Left cardiac atrium (tissue), 4 donors: ENCODE measurements at regions of chr12 and their contacts with region 1.

Region 1: GRCh38 chr12:92987362-92987761 is 58.3 kb upstream of the EEA1 start:
- DNase-seq: no peak
- ATAC-seq: peak; percentile 87 to 91

Region 2: GRCh38 chr12:93127582-93128331 is 140.4 kb after region 1 on chr12:
- intact Hi-C with region 1: loop called in 1 of 2 experiments (anchors 1 kb)
- DNase-seq: peak; percentile 79
- ATAC-seq: peak; percentile 92 to 96

Region 3: GRCh38 chr12:93390549-93391297 is 403.4 kb after region 1 on chr12:
- intact Hi-C with region 1: loop called (anchors 5 to 10 kb)
- DNase-seq: no peak
- ATAC-seq: peak in 1 of 2 donors; percentile 52

Region 4: DNA sequence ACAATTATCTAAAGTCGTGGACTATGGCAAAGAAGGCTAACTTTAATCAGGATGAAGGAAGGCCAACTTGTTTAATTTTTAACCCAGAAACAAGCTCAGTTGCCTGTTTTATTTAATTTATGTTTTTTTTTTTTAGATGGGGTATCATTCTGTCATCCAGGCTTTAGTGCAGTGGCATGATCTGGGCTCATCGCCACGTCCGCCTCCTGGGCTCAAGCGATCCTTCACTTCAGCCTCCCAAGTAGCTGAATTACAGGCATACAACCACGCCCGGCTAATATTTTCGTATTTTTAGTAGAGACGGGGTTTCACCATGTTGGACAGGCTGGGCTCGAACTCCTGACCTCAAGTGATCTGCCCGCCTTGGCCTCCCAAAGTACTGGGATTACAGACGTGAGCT is 410.1 kb after region 1 on chr12:
- intact Hi-C with region 1: loop called (anchors 5 to 10 kb)
- DNase-seq: no peak
- ATAC-seq: no peak

Region 5: GRCh38 chr12:93419388-93420034 is 432.1 kb after region 1 on chr12:
- intact Hi-C with region 1: loop called in 1 of 2 experiments (anchors 2 kb)
- DNase-seq: no peak
- ATAC-seq: peak; percentile 43 to 56

Region 6: GRCh38 chr12:94101738-94102660 is 1114.6 kb after region 1 on chr12:
- intact Hi-C with region 1: loop called in 1 of 2 experiments (anchors 5 kb)
- DNase-seq: peak; percentile 89
- ATAC-seq: peak; percentile 86 to 92